Astrocyte of the cerebellum (primary cell): ENCODE measurements at regions of chr12 and their contacts with region 1.

Region 1: DNA sequence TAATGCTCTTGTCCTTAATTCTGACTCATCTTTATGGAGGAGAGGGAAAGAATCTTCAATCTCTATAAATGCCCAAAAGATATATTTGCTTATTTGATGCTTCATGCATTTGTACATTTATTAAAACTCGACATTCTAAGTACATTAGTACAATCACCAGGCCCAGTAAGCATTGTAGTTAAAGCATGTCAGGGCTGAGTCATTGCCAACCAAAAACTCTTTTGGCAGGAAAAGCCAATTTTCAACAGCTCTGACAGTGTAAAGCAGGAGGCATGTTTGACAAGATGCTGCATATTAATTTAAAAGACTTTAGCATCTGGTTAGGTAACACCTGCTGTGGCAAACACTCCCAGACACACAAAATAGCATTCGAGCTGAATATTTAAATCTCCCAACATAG is 290.9 kb downstream of the PPFIA2 start:
- DNase-seq: peak; percentile 79
- H3K4me3 ChIP-seq: no peak overlapping the region
- CTCF ChIP-seq: no peak

Region 2: DNA sequence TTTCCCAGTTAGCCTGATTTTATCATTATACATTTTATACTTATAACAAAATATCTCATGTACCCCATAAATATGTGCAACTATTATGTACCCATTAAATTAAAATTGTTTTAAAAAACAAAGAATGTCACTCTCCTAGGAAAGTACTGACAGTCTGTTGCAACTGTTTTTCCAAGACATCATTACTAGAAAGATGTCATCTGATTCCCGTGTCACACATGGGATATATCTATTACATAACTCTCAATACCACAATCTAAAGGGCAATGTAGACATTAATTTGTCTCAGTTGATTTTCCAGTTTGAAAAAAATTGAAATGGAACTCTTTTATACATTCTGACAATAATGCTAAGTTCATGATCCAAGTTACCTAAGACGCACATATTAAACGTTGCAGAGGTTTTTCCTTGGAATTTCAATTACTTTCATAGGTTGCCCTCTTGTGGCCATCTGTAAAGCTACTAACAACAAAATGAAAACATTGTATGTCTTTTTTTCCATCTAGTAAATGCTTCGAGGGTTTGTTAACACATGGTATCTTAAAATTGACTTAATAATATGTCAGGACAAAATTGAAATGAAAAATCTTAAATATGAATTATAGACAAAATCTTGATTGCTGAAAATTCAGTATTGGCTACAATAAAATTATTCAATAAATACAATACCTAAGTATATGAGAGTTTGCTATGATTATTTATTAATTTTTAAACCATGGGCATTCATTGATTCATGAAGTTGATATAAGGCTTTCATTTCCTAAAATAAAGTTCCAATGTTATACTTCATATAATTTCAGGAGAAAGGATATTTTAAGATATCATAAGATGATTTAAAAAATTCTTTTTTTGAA is 159.4 kb after region 1 on chr12:
- in situ Hi-C with region 1: loop called (anchors 10 kb)
- DNase-seq: peak; percentile 49
- H3K4me3 ChIP-seq: no peak overlapping the region
- CTCF ChIP-seq: peak; percentile 43